Posterior vena cava (tissue), 2 donors: ENCODE measurements at regions of chr3 and their contacts with region 1.

Region 1: DNA sequence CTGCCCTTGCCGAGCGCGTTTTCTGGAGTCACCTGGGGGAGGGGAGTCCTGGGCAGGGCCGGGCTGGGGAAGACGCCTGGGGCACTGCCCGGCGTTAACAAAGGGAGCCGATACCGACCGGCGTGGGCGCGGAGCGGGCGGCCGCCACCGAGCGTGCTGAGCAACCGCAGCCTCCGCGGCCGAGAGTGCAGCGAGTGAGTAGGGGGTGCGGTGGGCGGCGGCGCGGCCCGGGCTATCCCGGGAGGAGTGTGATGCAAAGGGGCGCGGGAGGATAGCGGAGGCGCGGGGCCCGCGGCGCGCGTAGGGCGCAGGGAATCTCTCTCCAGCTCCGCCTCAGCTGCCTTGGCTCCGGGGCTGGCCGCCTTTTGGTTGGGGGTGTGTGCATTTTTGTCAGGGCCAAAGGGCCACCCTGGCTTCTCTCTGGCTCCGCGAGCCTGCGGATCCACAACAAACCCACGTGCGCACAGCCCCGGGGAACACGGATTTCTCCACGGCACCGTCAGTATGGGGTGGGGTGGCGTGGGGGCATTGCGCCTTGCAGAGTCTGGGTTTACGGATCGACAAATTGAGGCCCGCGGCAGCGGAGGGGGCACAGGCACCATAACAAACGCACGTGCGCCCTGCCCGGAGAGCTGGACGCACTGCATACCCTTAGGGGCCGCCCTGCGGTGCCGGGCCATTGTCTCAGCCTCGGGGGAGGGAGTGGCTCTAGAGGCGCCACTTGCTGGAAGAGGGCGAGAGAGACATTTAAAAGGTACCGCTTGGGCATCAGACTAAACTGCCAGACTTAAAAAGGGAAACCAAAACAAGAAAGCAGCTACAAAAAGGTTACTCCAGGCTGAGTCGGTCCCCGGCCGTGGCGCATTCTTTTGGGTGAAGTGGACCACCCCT is 560 bp downstream of the ST6GAL1 start:
- DNase-seq: peak; percentile 87

Region 2: DNA sequence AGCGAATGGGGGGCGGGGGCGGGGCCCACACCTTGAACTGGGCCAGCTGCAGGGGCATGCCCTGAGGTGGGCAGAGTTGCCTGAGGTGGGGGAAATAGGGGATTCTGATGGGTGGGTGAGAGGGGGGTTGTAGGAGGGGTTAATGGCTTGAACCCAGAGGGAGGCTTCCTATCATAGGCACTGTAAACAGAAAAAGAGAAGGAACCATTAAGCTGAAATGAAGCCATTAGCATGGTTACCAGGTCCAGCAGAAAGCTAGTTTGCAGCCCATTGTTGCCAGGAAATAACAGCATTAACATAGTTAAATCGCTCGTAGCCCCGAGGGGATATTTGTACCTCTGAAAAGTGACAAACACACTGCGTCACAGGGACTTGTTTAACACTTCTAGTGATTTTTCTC is 851.0 kb before region 1 on chr3:
- intact Hi-C with region 1: no loop called
- DNase-seq: no peak

Region 3: GRCh38 chr3:186806089-186807055 is 124.5 kb before region 1 on chr3 and contains the start of gene RFC4:
- intact Hi-C with region 1: no loop called
- DNase-seq: peak; percentile 97
- total RNA-seq, gene RFC4: 10.9 to 12.4 TPM

Region 4: GRCh38 chr3:186909078-186909853 is 21.6 kb before region 1 on chr3:
- intact Hi-C with region 1: no loop called
- DNase-seq: no peak

Region 5: DNA sequence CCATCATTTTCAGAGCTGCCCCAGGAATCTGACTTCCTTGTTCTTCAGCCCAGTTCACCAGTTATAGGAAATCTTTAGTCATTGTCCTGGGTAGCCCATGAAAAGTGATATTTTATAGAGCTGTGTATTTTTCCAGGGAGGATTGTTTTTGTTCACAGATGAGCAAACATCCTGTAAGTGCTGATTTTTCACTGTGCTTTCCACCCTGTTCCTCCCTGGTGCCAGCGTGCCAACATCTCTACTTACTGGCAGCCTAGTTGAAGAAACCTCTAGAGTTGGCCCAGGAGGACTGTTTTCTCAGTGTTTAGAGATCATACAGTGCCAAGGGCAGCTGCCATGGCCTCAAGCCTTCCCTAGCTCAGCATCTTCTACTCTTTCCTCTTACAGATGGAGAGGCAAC is 40.7 kb after region 1 on chr3:
- intact Hi-C with region 1: loop called in 1 of 2 experiments (anchors 5 kb)
- DNase-seq: no peak

Region 6: DNA sequence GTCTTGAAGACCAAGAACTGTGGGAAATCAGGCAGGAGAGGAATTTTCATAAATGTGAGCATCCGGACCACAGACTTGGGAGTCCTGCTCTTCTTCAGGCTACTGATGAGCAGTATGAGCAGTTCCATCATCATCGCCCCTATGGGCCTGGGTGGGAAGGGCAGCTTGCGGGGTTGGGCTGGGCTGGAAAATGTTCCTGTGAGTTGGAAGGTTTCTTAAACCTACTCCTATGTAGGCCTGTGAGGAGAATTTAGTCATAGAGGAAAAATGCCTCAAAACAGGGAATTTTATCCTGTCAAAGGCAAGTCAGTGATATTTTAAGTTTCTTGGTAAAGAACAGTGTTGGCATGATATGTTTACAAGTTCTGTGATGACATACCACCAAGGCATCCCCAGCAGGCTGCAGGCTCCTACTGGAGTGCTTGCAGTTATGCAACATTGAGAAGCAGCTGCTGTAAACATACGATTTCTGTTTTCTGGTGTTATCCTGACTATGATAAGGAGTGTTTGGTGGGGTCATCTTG is 350.4 kb after region 1 on chr3:
- intact Hi-C with region 1: no loop called
- DNase-seq: no peak